ENCODE measurements at regions of chr3 and their contacts with region 1.

Region 1: GRCh38 chr3:124895756-124896155 is 8.6 kb upstream of the ITGB5 start:
- DNase-seq: no peak
- ATAC-seq: no peak
- H3K4me3 ChIP-seq: no peak overlapping the region
- H3K27ac ChIP-seq: no peak overlapping the region
- H3K4me1 ChIP-seq: peaks cover 4% of the 10 kb centered on the region
- H3K27me3 ChIP-seq: no peaks in the 10 kb centered on the region
- CTCF ChIP-seq: no peak

Region 2: DNA sequence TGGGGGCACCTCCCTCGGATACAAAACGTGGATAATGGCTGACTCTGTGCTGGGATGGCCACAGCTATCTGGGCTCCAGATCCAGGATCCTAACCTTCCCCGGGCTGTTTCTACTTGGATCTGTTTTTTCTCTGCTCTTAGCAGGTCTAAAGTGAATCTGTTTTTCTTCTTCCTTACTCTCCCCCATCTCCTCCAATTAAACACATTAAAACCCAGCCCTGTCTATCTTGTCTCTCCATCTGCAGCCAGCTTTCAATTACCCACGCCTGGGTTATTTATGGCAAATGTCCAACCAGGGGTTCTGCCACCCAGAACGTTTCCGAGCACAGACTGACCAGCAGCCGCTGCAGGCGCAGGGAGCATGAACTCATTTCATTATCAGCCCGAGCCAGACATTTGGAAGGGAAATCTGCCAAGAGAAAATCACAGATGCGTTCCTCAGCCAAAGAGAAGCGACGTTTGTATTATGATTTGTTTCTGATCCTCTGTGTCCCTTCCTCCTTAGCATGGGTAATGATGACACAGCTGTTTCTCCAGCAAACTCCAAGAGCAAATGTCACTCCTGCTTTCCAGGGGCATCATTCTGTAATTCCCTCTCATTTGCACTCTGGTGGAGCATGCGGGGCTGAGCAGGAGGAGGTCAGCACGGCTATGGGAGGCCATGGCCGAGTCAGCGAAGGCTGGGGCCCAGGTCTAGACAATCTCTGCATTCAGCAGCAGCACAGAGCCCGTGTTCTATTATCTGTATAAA is 123.5 kb before region 1 on chr3:
- intact Hi-C with region 1: loop called (anchors 5 kb)
- DNase-seq: no peak
- ATAC-seq: peak in 1 of 2 donors; percentile 22
- H3K4me3 ChIP-seq: no peak overlapping the region
- H3K27ac ChIP-seq: no peak overlapping the region
- H3K4me1 ChIP-seq: peaks cover 49% of the 10 kb centered on the region
- H3K27me3 ChIP-seq: no peaks in the 10 kb centered on the region
- CTCF ChIP-seq: no peak

Measured in lower lobe of right lung (tissue), 2 donors.